PC-9 (cell line): ENCODE measurements at regions of chr1 and their contacts with region 1.

Region 1: GRCh38 chr1:150561974-150562445 is 12.8 kb downstream of the ADAMTSL4 start:
- DNase-seq: peak; percentile 85 to 92
- H3K4me3 ChIP-seq: peak overlapping the region; percentile 76
- H3K27ac ChIP-seq: peak overlapping the region; percentile 98
- H3K4me1 ChIP-seq: peaks cover 50% of the 10 kb centered on the region
- H3K27me3 ChIP-seq: no peaks in the 10 kb centered on the region
- CTCF ChIP-seq: no peak

Region 2: DNA sequence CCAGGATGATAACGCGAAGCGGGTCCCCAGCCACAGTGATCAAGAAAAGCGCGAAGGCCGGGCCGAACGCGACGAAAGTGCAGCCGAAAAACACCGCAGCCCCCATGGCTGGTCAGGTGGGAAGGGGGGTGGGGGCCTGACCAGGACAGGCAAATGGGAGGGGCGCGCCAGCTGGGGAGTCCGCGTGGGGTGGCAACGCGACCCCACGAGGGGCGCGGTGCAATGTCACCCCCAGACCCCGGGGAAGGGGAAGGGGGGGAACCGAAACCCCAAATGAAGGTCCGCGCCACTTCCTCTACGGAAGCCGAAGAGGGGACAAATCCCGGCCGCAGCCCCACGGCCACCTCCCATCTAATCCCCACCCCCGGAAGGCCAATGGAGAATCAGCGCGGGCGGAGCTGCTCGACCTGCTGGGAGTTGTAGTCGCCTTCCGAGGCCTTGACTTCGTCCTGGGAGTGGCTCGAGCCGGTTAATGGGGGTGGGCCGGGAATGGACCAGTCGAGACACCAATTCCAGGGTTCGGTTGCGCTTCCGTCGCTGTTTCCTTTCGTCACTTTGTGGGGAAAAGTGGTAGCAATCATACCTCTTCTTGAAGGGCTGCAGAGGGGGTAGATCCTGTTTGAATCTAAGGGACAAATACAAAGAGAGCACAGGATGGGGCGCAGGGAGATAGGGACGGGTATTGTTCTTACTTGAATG is 293.2 kb before region 1 on chr1 and contains the start of gene APH1A:
- CTCF ChIA-PET with region 1: no interaction called
- POLR2A ChIA-PET with region 1: no interaction called
- intact Hi-C with region 1: loop called (anchors 10 kb)
- DNase-seq: peak; percentile 85 to 92
- H3K4me3 ChIP-seq: peak within 1 kb of the TSS; percentile 87
- H3K27ac ChIP-seq: peak within 1 kb of the TSS; percentile 79
- H3K4me1 ChIP-seq: peaks cover 24% of the 10 kb centered on the region
- H3K27me3 ChIP-seq: no peaks in the 10 kb centered on the region
- CTCF ChIP-seq: no peak
- total RNA-seq, gene APH1A: 152 and 173 TPM in 2 replicates

Region 3: DNA sequence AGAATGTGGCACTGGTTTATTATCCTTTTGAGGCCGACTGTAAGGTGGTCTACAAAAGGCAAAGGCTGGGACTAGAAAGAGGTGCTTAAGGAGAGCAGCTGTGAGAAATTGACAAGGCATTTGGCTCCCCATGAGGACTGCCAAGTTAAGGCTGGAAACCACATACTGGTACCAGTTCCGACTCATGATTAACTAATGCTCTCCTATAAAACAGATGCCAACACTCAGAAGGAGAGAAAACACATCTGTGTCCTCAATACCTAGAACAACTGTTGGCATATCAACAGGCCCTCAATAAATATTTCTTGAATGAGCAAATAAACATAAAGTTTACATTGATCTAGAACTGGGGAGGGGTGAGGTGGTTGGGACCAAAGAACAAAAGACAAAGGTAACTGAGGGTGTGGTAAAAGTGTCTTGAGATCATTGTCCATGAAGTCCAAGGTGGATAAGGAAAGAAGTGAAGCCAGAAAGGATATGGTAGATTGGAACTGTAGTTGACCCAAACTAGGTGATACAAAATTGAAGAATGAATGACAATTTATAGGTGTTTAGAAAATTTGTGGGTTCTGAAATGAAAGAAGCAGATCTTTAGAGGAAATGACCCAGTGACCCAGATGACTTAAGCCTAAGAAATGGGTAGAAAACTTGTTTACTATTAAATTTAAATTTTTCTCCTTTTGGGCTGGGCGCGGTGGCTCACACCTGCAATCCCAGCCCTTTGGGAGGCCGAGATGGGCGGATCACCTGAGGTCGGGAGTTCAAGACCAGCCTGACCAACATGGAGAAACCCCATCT is 34.3 kb after region 1 on chr1:
- CTCF ChIA-PET with region 1: no interaction called
- POLR2A ChIA-PET with region 1: interaction called, 20 read pairs
- intact Hi-C with region 1: no loop called
- DNase-seq: no peak
- H3K4me3 ChIP-seq: no peak overlapping the region
- H3K27ac ChIP-seq: 0 out of 2 replicates have a peak overlapping the region, but pooled peaks have one; percentile 17
- H3K4me1 ChIP-seq: peaks cover 30% of the 10 kb centered on the region
- H3K27me3 ChIP-seq: no peaks in the 10 kb centered on the region
- CTCF ChIP-seq: no peak

Region 4: DNA sequence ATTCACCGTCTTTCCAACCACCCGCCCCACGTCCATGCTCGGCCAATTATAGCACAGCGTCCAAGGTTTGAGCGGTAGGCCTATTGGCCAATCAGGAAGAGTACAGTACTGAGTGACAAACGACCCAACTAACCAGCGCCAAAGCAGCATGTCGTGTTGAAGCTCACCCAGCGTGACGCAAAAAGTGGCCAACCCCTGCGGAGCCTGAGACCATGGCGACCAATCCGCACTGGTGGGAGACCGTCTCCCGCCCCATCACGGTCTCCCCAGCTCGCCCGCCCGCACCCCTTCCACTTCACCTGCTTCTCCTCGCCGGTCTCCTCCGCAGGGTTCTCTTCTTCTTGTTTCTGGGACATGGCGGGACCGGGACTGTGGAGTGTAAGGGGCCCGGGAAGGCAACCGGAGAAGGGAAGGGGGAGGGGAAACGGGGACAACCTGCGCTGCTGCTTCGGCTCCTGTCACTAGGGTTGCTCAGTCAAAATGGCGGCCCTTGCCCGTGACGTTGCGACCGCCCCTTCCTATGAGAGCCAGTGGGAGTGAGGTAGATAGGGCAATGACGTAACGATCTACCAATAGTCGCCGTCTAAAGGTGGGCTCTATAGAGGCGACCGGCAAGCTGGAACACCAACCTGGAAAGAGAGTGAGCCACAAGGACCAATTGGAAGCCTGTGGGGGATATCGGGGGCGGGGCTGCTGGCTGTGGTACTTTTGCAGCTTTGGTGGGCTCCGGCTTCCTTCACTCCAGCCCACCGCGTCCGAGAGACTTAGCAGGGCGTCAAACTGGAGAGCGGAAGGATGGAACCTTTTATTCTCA is 67.3 kb after region 1 on chr1 and contains the start of gene ENSA:
- CTCF ChIA-PET with region 1: interaction called, 4 read pairs
- POLR2A ChIA-PET with region 1: interaction called, 9 read pairs
- intact Hi-C with region 1: loop called (anchors 1 kb)
- DNase-seq: peak; percentile 95 to 97
- H3K4me3 ChIP-seq: peak within 1 kb of the TSS; percentile 96
- H3K27ac ChIP-seq: peak within 1 kb of the TSS; percentile 76
- H3K4me1 ChIP-seq: peaks cover 49% of the 10 kb centered on the region
- H3K27me3 ChIP-seq: no peaks in the 10 kb centered on the region
- CTCF ChIP-seq: no peak
- total RNA-seq, gene ENSA: 229 and 263 TPM in 2 replicates

Region 5: DNA sequence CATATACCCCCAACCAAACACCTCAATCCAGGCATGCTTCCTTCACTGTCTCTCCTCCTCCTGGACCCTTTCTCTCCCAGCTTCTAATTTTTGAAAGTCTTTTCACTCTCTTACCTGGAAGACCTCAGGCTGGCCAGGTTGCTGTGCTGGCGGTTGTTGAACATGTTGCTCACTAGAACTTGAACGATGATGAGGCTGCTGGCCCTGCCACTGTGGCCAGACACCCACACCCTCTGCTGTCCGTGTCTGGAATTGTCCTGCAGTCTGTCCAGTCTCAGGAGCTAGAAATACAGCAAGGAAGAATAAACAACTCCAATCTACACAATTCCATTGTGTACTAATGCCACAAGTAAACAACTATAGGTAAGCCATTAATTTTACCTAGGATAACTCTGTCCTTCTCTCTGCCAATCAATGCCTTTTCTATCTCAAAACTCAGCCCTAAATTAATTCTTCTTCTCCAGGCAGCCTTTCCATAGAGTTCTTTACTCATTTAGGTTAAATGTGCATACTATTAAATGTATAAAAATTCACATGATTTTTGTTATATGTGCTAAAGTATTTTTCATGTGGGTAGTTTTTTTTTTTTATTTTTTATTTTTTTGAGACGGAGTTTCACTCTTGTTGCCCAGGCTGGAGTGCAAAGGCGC is 251.2 kb after region 1 on chr1:
- CTCF ChIA-PET with region 1: interaction called, 16 read pairs
- POLR2A ChIA-PET with region 1: no interaction called
- intact Hi-C with region 1: loop called (anchors 1 kb)
- DNase-seq: peak; percentile 38 to 75
- H3K4me3 ChIP-seq: no peak overlapping the region
- H3K27ac ChIP-seq: no peak overlapping the region
- H3K4me1 ChIP-seq: no peaks in the 10 kb centered on the region
- H3K27me3 ChIP-seq: no peaks in the 10 kb centered on the region
- CTCF ChIP-seq: peak; percentile 85

Region 6: GRCh38 chr1:150979092-150980056 is 417.4 kb after region 1 on chr1:
- CTCF ChIA-PET with region 1: interaction called, 4 read pairs
- POLR2A ChIA-PET with region 1: no interaction called
- intact Hi-C with region 1: loop called (anchors 5 kb)
- DNase-seq: peak; percentile 72 to 84
- H3K4me3 ChIP-seq: no peak overlapping the region
- H3K27ac ChIP-seq: peak overlapping the region; percentile 77; the same call in 1 of the 2 replicates
- H3K4me1 ChIP-seq: peaks cover 90% of the 10 kb centered on the region
- H3K27me3 ChIP-seq: no peaks in the 10 kb centered on the region
- CTCF ChIP-seq: peak; percentile 99